CD8-positive, alpha-beta T cell (primary cell): ENCODE measurements at regions of chr12 and their contacts with region 1.

Region 1: GRCh38 chr12:1605129-1606020 is 11.0 kb upstream of the FBXL14 start:
- DNase-seq: peak in 8 of 9 experiments; percentile 32 to 86 (median 64)
- ATAC-seq: peak; percentile 70
- H3K4me3 ChIP-seq: peak overlapping the region; percentile 36 to 37
- H3K4me3 Mint-ChIP-seq: peak overlapping the region; percentile 86
- H3K27ac ChIP-seq: no peak overlapping the region
- H3K27ac Mint-ChIP-seq: peak overlapping the region; percentile 24
- H3K4me1 ChIP-seq: peaks cover 23% of the 10 kb centered on the region
- H3K4me1 Mint-ChIP-seq: peaks cover 31% of the 10 kb centered on the region
- H3K27me3 ChIP-seq: no peaks in the 10 kb centered on the region
- H3K27me3 Mint-ChIP-seq: no peaks in the 10 kb centered on the region
- CTCF ChIP-seq: peak; percentile 64

Region 2: DNA sequence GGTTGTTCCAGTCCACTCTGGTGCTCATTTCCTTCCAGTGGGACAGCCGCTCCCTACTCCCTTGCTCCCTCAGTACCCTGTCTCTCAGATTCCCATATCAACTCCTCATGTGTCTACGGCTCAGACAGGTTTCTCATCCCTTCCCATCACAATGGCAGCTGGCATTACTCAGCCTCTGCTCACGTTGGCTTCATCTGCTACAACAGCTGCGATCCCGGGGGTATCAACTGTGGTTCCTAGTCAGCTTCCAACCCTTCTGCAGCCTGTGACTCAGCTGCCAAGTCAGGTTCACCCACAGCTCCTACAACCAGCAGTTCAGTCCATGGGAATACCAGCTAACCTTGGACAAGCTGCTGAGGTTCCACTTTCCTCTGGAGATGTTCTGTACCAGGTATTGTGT is 725.7 kb before region 1 on chr12:
- CTCF ChIA-PET with region 1: no interaction called
- POLR2A ChIA-PET with region 1: no interaction called
- intact Hi-C with region 1: no loop called
- DNase-seq: no peak
- ATAC-seq: no peak
- H3K4me3 ChIP-seq: no peak overlapping the region
- H3K4me3 Mint-ChIP-seq: no peak overlapping the region
- H3K27ac ChIP-seq: no peak overlapping the region
- H3K27ac Mint-ChIP-seq: no peak overlapping the region
- H3K4me1 ChIP-seq: no peaks in the 10 kb centered on the region
- H3K4me1 Mint-ChIP-seq: no peaks in the 10 kb centered on the region
- H3K27me3 ChIP-seq: no peaks in the 10 kb centered on the region
- H3K27me3 Mint-ChIP-seq: no peaks in the 10 kb centered on the region
- CTCF ChIP-seq: no peak

Region 3: DNA sequence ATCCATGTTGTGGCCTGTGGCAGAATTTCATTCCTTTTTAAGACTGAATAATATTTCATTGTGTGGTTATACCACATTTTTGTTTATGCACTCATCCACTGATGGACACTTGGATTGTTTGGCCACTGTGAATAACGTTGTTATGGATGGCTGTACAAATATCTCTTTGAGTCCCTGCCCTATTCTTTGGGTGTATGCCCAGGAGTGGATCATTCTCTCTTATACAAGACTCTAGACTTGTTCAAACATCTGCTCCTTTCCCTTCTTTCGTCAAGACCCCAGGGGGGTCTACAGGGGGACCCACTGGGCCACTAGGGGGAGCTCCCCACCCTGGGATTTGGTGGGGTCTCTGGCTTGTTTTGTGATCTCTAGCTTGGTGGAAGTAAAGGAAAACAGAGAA is 88.4 kb before region 1 on chr12:
- CTCF ChIA-PET with region 1: no interaction called
- POLR2A ChIA-PET with region 1: no interaction called
- intact Hi-C with region 1: loop called in 1 of 2 experiments (anchors 1 kb)
- DNase-seq: peak in 2 of 9 experiments; percentile 12 to 22
- ATAC-seq: no peak
- H3K4me3 ChIP-seq: no peak overlapping the region
- H3K4me3 Mint-ChIP-seq: no peak overlapping the region
- H3K27ac ChIP-seq: no peak overlapping the region
- H3K27ac Mint-ChIP-seq: no peak overlapping the region
- H3K4me1 ChIP-seq: no peaks in the 10 kb centered on the region
- H3K4me1 Mint-ChIP-seq: no peaks in the 10 kb centered on the region
- H3K27me3 ChIP-seq: peaks cover 0 to 7% of the 10 kb centered on the region in 2 experiments
- H3K27me3 Mint-ChIP-seq: peaks cover 14% of the 10 kb centered on the region
- CTCF ChIP-seq: no peak